ENCODE measurements at regions of chr14 and their contacts with region 1.

Region 1: DNA sequence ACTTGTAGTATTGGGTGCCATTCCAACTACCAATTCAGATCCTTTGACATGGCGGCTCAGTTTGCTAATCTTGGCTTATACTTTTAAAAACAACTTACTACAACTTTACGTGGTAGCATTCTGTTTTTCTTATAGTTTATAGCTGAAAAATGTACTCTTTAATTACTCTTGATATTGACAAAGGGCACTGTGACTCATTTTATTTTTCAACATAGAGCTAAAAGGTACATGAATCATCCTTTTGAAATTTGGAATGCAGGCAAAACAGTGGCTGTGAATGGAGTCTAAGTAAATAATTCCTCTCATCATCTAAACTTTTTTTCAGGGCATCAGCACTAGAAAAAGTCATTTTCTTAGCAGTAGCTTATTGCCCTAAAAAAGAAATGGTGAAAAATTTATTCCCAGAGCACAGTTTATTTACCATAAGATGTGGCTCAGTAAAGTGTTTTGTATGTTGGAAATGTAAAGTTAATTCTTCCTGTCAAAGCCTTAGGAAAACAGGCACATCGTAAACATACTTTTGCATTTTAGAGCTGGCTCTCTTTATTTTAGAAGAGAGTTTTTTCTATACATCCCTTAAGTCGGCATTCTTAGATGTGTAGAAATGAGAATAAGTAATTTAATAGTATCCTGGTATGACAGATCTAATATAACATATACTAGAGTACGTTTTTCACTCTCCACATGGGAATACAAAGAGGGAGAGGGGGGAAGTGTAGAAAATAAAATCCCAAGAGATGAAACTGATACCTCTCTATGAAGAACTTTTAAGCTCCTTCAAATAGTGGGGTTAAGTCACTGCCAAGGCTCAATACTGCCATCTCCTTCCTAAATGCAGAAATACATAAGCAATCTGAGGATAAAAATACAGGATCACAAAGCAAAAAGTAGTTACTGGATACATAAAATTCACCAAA is 55.2 kb downstream of the SLC25A21 start:
- DNase-seq: peak; percentile 85
- H3K4me3 ChIP-seq: no peak overlapping the region
- H3K27ac ChIP-seq: no peak overlapping the region
- H3K4me1 ChIP-seq: peaks cover 10% of the 10 kb centered on the region
- H3K27me3 ChIP-seq: no peaks in the 10 kb centered on the region
- CTCF ChIP-seq: peak; percentile 74

Region 2: DNA sequence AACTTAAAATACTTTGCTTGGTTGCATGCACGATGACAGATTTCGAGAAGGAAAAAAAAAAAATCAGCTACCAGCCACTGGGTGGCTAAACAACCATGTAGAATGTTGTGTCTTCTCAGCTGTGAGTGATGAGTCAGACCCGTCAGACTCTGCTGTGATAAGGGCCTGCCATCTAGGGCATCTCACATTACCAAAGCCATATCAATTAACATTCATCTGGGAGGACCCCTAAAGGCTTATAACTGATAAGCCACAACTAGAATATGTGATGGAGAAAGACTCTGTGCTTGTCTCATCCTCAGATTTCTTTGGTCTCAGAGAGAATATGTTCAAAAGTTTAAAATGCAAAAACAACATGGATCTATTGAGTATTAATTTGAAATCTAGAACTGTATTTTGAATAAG is 344.1 kb before region 1 on chr14:
- CTCF ChIA-PET with region 1: interaction called, 4 read pairs
- POLR2A ChIA-PET with region 1: no interaction called
- intact Hi-C with region 1: loop called (anchors 5 kb)
- DNase-seq: peak; percentile 80
- H3K4me3 ChIP-seq: no peak overlapping the region
- H3K27ac ChIP-seq: no peak overlapping the region
- H3K4me1 ChIP-seq: peaks cover 31% of the 10 kb centered on the region
- H3K27me3 ChIP-seq: no peaks in the 10 kb centered on the region
- CTCF ChIP-seq: peak; percentile 60

Region 3: DNA sequence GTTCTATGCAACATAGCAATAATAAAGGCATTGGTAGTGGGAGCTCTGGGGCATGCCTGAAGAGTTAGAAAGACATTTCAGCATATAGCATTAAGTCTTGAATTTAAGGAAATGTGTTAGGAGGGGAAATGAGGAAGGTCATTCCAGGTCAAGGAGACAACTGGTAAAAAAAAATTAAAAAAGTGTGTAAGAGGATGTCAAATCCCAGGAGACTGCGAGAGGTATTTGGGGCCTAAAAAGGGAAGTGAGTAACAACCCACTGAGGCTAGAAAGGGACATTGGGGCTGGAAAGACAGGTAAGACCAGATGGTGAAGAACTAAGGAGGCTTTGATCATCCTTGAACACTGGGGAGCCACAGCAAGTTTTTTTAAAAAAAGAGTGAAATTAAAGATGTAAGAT is 97.7 kb before region 1 on chr14:
- CTCF ChIA-PET with region 1: no interaction called
- POLR2A ChIA-PET with region 1: no interaction called
- intact Hi-C with region 1: no loop called
- DNase-seq: no peak
- H3K4me3 ChIP-seq: no peak overlapping the region
- H3K27ac ChIP-seq: no peak overlapping the region
- H3K4me1 ChIP-seq: peaks cover 26% of the 10 kb centered on the region
- H3K27me3 ChIP-seq: no peaks in the 10 kb centered on the region
- CTCF ChIP-seq: no peak

Region 4: DNA sequence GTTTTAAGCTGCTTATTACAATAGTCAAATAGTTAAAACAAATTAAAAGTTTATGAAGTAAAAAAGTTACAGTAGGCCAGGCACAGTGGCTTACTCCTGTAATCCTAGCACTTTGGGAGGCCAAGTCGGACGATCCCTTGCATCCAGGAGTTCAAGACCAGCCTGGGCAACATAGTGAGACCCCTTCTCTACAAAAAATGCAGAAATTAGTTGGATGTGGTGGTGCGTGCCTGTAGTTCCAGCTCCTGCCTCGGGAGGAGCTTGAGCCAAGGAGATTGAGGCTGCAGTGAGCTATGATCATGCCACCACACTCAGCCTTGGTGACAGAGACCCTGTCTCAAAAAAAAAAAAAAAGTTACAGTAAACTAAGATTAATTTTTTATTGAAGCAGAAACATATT is 223.2 kb after region 1 on chr14:
- CTCF ChIA-PET with region 1: no interaction called
- POLR2A ChIA-PET with region 1: no interaction called
- intact Hi-C with region 1: no loop called
- DNase-seq: peak; percentile 1
- H3K4me3 ChIP-seq: no peak overlapping the region
- H3K27ac ChIP-seq: no peak overlapping the region
- H3K4me1 ChIP-seq: no peaks in the 10 kb centered on the region
- H3K27me3 ChIP-seq: no peaks in the 10 kb centered on the region
- CTCF ChIP-seq: 0 out of 2 replicates have a peak, but pooled peaks have one; percentile 15